ENCODE measurements at regions of chr3 and their contacts with region 1.

Region 1: DNA sequence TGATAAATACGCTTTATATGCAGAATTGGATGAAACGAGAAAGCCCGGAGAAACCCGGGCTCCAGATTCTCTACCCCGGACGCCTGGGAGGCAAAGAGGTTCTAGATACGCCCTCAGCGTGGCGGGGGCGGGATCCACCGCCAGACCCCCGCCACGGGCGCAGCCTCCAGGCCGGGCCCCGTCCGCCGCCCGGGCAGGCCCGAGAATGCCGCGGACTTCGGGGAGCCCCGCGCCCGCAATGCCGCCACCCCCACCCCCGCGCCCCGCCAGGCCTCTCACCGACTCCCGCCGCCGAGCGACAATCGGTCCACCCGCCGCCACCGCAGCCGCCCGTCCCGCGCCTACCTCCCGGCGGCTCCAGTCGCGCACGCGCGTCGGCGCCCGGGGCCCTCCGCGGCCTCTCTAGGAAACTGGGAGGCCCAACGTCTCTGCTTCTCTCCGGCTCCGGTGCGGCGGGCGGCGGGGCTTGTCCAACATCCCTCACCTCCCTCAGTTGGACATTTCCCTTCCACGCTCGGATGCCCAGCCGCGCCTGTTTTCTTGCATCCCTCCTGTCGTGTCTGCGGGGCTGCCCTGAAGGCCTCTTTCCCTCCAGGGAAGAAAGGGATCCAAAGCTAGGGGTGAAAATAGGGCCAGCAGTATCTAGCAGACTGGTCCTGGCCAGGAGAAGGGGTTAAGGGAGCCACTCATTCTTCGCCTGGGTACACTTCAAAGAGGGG is at the start of gene ZNF445:
- DNase-seq: peak; percentile 74
- ATAC-seq: peak; percentile 97
- H3K4me3 ChIP-seq: peak within 1 kb of the TSS; percentile 55
- H3K27ac ChIP-seq: peak within 1 kb of the TSS; percentile 74
- H3K4me1 ChIP-seq: no peaks in the 10 kb centered on the region; the same call in 1 of the 2 replicates
- H3K27me3 ChIP-seq: no peaks in the 10 kb centered on the region
- CTCF ChIP-seq: no peak
- POLR2A ChIP-seq: peak; percentile 65; the same call in 1 of the 2 replicates
- RAD21 ChIP-seq: no peak
- total RNA-seq, gene ZNF445: 6.3 and 6.4 TPM in 2 replicates

Region 2: GRCh38 chr3:44492496-44492895 is 15.0 kb after region 1 on chr3:
- CTCF ChIA-PET with region 1: no interaction called
- POLR2A ChIA-PET with region 1: no interaction called
- dilution Hi-C with region 1: no loop called
- in situ Hi-C with region 1: no loop called
- intact Hi-C with region 1: no loop called
- DNase-seq: no peak
- ATAC-seq: no peak
- H3K4me3 ChIP-seq: no peak overlapping the region
- H3K27ac ChIP-seq: no peak overlapping the region
- H3K4me1 ChIP-seq: no peaks in the 10 kb centered on the region
- H3K27me3 ChIP-seq: no peaks in the 10 kb centered on the region
- CTCF ChIP-seq: no peak
- POLR2A ChIP-seq: no peak
- RAD21 ChIP-seq: no peak

Region 3: GRCh38 chr3:44510000-44510368 is 32.5 kb after region 1 on chr3:
- CTCF ChIA-PET with region 1: no interaction called
- POLR2A ChIA-PET with region 1: no interaction called
- dilution Hi-C with region 1: no loop called
- in situ Hi-C with region 1: no loop called
- intact Hi-C with region 1: loop called (anchors 1 kb)
- DNase-seq: peak; percentile 17
- ATAC-seq: no peak
- H3K4me3 ChIP-seq: peak overlapping the region; percentile 94
- H3K27ac ChIP-seq: peak overlapping the region; percentile 15; the same call in 1 of the 2 replicates
- H3K4me1 ChIP-seq: peaks cover 6% of the 10 kb centered on the region
- H3K27me3 ChIP-seq: no peaks in the 10 kb centered on the region
- CTCF ChIP-seq: no peak
- POLR2A ChIP-seq: no peak
- RAD21 ChIP-seq: no peak